ENCODE measurements at regions of chr3 and their contacts with region 1.

Region 1: GRCh38 chr3:15647611-15648167 is 46.1 kb downstream of the BTD start:
- DNase-seq: peak; percentile 87
- H3K4me3 Mint-ChIP-seq: peak overlapping the region; percentile 36
- H3K27ac Mint-ChIP-seq: peak overlapping the region; percentile 76
- H3K4me1 Mint-ChIP-seq: peaks cover 35% of the 10 kb centered on the region
- H3K27me3 Mint-ChIP-seq: peaks cover 4% of the 10 kb centered on the region

Region 2: GRCh38 chr3:15629860-15630597 is 17.7 kb before region 1 on chr3:
- CTCF ChIA-PET with region 1: interaction called, 5 read pairs
- intact Hi-C with region 1: loop called (anchors 2 kb)
- DNase-seq: peak; percentile 84
- H3K4me3 Mint-ChIP-seq: peak overlapping the region; percentile 37
- H3K27ac Mint-ChIP-seq: peak overlapping the region; percentile 28
- H3K4me1 Mint-ChIP-seq: peaks cover 46% of the 10 kb centered on the region
- H3K27me3 Mint-ChIP-seq: no peaks in the 10 kb centered on the region

Region 3: DNA sequence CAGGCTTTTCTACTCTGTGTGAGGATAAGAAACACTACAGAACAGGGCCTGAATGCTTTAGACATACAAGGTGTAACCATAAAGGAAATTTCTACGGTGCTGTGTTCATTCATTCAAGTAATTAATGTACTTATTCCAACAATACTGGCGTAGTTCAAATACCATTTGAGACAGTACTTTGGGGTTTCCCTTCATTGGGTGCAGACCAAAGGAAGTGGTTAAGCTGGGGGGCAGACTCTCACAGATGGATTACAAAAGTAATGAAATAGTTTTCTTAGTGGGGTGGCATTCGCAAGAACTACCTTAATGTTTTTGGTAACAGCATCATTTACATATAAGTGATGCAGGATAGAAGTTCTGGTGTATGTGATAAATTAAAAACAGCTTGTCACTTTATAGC is 19.8 kb after region 1 on chr3:
- CTCF ChIA-PET with region 1: no interaction called
- intact Hi-C with region 1: loop called (anchors 1 kb)
- DNase-seq: peak; percentile 60
- H3K4me3 Mint-ChIP-seq: no peak overlapping the region
- H3K27ac Mint-ChIP-seq: peak overlapping the region; percentile 30
- H3K4me1 Mint-ChIP-seq: peaks cover 20% of the 10 kb centered on the region
- H3K27me3 Mint-ChIP-seq: no peaks in the 10 kb centered on the region

Region 4: GRCh38 chr3:15768421-15769255 is 120.9 kb after region 1 on chr3:
- CTCF ChIA-PET with region 1: no interaction called
- intact Hi-C with region 1: loop called (anchors 1 kb)
- DNase-seq: peak; percentile 7
- H3K4me3 Mint-ChIP-seq: no peak overlapping the region
- H3K27ac Mint-ChIP-seq: peak overlapping the region; percentile 11
- H3K4me1 Mint-ChIP-seq: peaks cover 40% of the 10 kb centered on the region
- H3K27me3 Mint-ChIP-seq: no peaks in the 10 kb centered on the region

Region 5: DNA sequence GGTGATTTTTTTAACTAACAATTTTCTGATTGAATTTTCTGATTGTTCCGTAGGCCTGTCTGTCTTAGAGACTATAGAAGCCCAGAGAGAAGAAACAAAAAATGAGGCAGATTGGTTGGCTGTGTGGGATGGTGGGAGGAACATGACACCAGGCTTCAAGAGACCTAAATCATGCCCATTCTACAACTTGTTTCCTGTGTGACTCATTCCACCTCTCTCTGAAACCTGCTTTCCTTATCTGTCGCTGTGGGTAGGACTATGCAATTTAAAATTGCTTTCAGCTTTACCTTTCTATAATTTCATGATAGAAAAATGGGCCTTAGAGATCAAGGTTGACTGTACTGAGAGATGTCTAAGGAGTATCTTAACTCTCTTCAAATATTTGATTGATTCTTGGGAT is 661.9 kb after region 1 on chr3:
- CTCF ChIA-PET with region 1: no interaction called
- intact Hi-C with region 1: loop called (anchors 5 kb)
- DNase-seq: peak; percentile 76
- H3K4me3 Mint-ChIP-seq: peak overlapping the region; percentile 22
- H3K27ac Mint-ChIP-seq: peak overlapping the region; percentile 92
- H3K4me1 Mint-ChIP-seq: peaks cover 91% of the 10 kb centered on the region
- H3K27me3 Mint-ChIP-seq: no peaks in the 10 kb centered on the region

Measured in activated naive CD4-positive, alpha-beta T cell treated with anti-CD3 and anti-CD28 coated beads for 36 hours (primary cell).